ENCODE measurements at regions of chr1 and their contacts with region 1.

Region 1: GRCh38 chr1:22416555-22417454 is 34.8 kb upstream of the ZBTB40 start:
- DNase-seq: peak; percentile 60
- ATAC-seq: peak; percentile 56
- H3K4me3 ChIP-seq: no peak overlapping the region
- H3K27ac ChIP-seq: no peak overlapping the region
- H3K4me1 ChIP-seq: peaks cover 18% of the 10 kb centered on the region
- H3K27me3 ChIP-seq: peaks cover 15% of the 10 kb centered on the region
- CTCF ChIP-seq: peak; percentile 94
- POLR2A ChIP-seq: no peak
- RAD21 ChIP-seq: peak; percentile 94

Region 2: DNA sequence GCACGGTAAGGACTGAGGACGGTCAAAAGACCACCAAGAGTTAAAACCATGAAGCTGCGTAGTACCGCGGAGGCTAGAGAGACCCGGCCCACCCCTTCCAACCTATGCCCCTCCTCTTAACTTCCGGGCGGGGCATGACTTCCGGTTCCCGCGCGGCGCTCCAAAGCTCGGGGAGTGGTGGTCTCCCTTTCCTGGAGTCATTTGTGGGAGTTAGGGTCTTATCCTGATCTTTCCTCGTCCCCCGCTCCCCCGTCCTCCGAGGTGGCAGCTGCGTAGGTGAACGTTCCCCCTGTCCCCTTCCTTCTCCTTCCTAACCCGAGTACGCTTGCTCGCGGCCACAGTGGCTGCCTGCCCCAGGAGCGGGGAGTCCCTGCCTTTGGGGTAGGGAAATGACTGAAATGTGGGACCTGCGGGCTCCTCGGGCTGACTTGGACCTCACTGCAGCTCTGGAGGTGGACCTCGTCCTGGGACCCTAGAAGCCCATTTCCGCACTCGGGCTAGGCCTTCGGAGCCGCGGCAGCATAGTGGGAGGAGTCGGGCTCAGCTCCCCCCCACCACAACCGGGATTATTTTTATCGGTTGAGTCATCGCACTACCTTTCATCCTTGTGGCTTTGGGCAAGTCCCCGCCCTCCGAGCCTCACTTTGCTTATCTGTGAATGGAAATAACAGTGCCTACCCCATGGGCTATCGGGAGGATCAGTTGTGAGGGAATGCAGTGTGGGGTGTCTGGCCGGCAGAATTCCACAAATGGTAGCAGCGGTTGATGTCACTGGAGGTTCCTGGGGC is 391.2 kb before region 1 on chr1:
- CTCF ChIA-PET with region 1: no interaction called
- POLR2A ChIA-PET with region 1: no interaction called
- dilution Hi-C with region 1: no loop called
- in situ Hi-C with region 1: no loop called
- intact Hi-C with region 1: loop called (anchors 10 kb)
- DNase-seq: peak; percentile 88
- ATAC-seq: peak; percentile 96
- H3K4me3 ChIP-seq: peak overlapping the region; percentile 72
- H3K27ac ChIP-seq: peak overlapping the region; percentile 86
- H3K4me1 ChIP-seq: peaks cover 6% of the 10 kb centered on the region
- H3K27me3 ChIP-seq: no peaks in the 10 kb centered on the region
- CTCF ChIP-seq: no peak
- POLR2A ChIP-seq: peak; percentile 92
- RAD21 ChIP-seq: no peak

Region 3: GRCh38 chr1:22105611-22106207 is 311.1 kb before region 1 on chr1:
- CTCF ChIA-PET with region 1: no interaction called
- POLR2A ChIA-PET with region 1: no interaction called
- dilution Hi-C with region 1: no loop called
- in situ Hi-C with region 1: loop called (anchors 5 kb)
- intact Hi-C with region 1: loop called (anchors 1 kb)
- DNase-seq: peak; percentile 69
- ATAC-seq: peak; percentile 77
- H3K4me3 ChIP-seq: no peak overlapping the region
- H3K27ac ChIP-seq: no peak overlapping the region
- H3K4me1 ChIP-seq: peaks cover 9% of the 10 kb centered on the region
- H3K27me3 ChIP-seq: no peaks in the 10 kb centered on the region
- CTCF ChIP-seq: peak; percentile 76
- POLR2A ChIP-seq: no peak
- RAD21 ChIP-seq: peak; percentile 74

Region 4: GRCh38 chr1:22131875-22132486 is 284.8 kb before region 1 on chr1:
- CTCF ChIA-PET with region 1: no interaction called
- POLR2A ChIA-PET with region 1: no interaction called
- dilution Hi-C with region 1: no loop called
- in situ Hi-C with region 1: no loop called
- intact Hi-C with region 1: loop called (anchors 1 kb)
- DNase-seq: no peak
- ATAC-seq: peak; percentile 30
- H3K4me3 ChIP-seq: no peak overlapping the region
- H3K27ac ChIP-seq: no peak overlapping the region
- H3K4me1 ChIP-seq: peaks cover 4% of the 10 kb centered on the region
- H3K27me3 ChIP-seq: peaks cover 6% of the 10 kb centered on the region
- CTCF ChIP-seq: peak; percentile 50
- POLR2A ChIP-seq: no peak
- RAD21 ChIP-seq: peak; percentile 43

Region 5: GRCh38 chr1:22641906-22642636 is 225.3 kb after region 1 on chr1:
- CTCF ChIA-PET with region 1: interaction called, 18 read pairs
- POLR2A ChIA-PET with region 1: no interaction called
- dilution Hi-C with region 1: no loop called
- in situ Hi-C with region 1: loop called (anchors 5 kb)
- intact Hi-C with region 1: loop called (anchors 1 kb)
- DNase-seq: peak; percentile 27
- ATAC-seq: peak; percentile 88
- H3K4me3 ChIP-seq: no peak overlapping the region
- H3K27ac ChIP-seq: no peak overlapping the region
- H3K4me1 ChIP-seq: peaks cover 2% of the 10 kb centered on the region; the same call in 1 of the 2 replicates
- H3K27me3 ChIP-seq: peaks cover 42% of the 10 kb centered on the region
- CTCF ChIP-seq: peak; percentile 86
- POLR2A ChIP-seq: no peak
- RAD21 ChIP-seq: peak; percentile 91

Region 6: GRCh38 chr1:22892789-22893188 is 476.0 kb after region 1 on chr1:
- CTCF ChIA-PET with region 1: no interaction called
- POLR2A ChIA-PET with region 1: no interaction called
- dilution Hi-C with region 1: no loop called
- in situ Hi-C with region 1: no loop called
- intact Hi-C with region 1: no loop called
- DNase-seq: no peak
- ATAC-seq: no peak
- H3K4me3 ChIP-seq: no peak overlapping the region
- H3K27ac ChIP-seq: no peak overlapping the region
- H3K4me1 ChIP-seq: 0 out of 2 replicates have a peak, but pooled peaks cover 3% of the 10 kb centered on the region
- H3K27me3 ChIP-seq: no peaks in the 10 kb centered on the region
- CTCF ChIP-seq: no peak
- POLR2A ChIP-seq: no peak
- RAD21 ChIP-seq: no peak

Region 7: DNA sequence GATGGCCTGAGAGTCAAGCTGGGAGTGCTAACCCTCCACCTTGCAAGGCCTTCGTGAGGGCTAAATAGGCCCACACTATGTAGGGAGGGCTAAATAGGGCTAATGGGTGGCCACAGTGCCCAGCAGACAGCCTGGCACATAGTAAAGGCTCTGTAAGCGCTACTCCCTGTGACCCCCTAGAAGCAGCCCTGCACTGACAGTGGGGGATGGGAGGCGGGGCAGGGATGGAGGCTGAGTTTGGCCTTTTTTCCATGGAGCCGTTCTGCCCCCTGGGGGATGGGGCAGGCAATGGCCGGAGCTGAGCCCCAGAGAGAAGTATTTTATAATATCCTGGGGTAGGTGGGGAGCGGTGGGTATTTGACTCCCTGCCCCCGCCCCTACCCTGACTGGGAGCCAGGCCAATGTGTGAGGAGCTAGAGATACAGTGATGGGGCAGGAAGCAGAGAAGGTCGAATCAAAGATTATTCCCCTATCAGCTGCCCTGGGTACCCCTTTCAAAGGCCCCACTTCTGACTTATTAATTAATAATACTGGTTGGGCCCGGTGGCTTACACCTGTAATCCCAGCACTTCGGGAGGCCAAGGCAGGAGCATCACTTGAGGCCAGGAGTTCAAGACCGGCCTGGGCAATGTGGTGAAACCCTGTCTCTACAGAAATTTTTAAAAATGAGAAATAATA is 513.6 kb after region 1 on chr1:
- CTCF ChIA-PET with region 1: no interaction called
- POLR2A ChIA-PET with region 1: no interaction called
- dilution Hi-C with region 1: no loop called
- in situ Hi-C with region 1: no loop called
- intact Hi-C with region 1: loop called (anchors 10 kb)
- DNase-seq: peak; percentile 17
- ATAC-seq: peak; percentile 96
- H3K4me3 ChIP-seq: no peak overlapping the region
- H3K27ac ChIP-seq: no peak overlapping the region
- H3K4me1 ChIP-seq: no peaks in the 10 kb centered on the region
- H3K27me3 ChIP-seq: peaks cover 43% of the 10 kb centered on the region
- CTCF ChIP-seq: peak; percentile 92
- POLR2A ChIP-seq: no peak
- RAD21 ChIP-seq: peak; percentile 90

Measured in IMR-90 (cell line).